AG04450 (cell line): ENCODE measurements at regions of chr17 and their contacts with region 1.

Region 1: DNA sequence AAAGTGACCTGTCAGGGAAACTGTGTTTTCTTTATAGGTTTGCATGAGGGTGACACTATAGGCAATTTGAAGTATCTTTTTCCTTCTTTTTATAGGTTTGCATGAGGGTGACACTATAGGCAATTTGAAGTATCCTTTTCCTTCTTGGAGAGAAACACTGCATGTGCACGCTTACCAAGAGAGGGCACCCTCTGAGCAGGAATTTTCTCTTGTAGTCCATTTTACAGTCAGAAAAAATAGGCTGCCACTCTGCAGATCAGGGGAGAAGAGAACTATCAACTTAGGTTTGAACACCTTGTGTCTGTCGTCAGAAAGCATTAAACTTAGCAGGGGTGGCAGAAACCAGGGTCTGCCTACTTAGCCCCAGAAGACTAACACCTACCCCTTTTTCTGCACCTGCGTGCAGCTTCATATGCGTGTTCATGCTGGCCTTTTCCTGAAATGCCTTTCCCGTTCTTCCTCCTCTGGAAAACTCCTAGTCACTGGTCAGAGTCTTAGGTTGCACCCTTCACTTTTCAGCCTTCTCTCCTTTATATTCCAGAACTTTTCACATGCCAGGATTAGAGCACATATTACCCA is 16.4 kb upstream of the SMIM36 start:
- DNase-seq: peak; percentile 44
- H3K4me3 ChIP-seq: no peak overlapping the region
- H3K27ac ChIP-seq: no peak overlapping the region
- H3K27me3 ChIP-seq: no peaks in the 10 kb centered on the region
- CTCF ChIP-seq: peak; percentile 81

Region 2: DNA sequence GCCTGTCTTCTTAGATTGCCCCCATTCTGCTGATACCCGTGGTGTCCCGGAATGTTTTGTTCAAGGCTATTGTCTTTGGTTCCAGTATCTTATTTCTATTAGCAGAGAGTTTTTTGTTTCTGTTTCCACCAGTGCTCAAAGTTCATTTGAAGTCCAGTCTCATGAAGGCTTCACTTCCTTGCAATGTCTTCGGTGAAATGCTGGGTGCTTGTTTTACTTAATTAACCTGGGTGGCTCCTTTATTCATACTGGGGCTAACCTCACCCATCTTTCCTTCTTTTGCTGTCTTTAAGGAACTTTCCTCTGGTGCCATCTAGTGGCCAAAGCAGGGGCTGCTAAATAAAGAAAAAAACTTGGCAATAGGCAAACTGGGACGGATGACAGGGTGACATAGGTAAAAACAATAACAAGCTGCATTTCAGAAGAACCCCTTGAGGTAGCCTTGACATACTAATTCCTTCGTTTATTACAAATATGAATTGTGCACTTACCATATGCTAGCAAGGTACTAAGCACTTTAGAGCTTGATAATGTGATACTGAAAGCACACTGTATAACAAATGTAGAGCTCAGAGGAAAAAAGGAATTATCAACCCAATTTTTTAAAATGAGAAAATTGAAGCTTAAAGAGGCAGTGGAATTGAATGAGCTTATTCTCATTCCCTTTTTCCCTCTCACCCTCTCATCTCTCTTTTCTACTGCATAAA is 13.6 kb before region 1 on chr17:
- CTCF ChIA-PET with region 1: interaction called, 16 read pairs
- POLR2A ChIA-PET with region 1: no interaction called
- DNase-seq: peak; percentile 30
- H3K4me3 ChIP-seq: no peak overlapping the region
- H3K27ac ChIP-seq: no peak overlapping the region
- H3K27me3 ChIP-seq: peaks cover 5% of the 10 kb centered on the region
- CTCF ChIP-seq: peak; percentile 99

Region 3: GRCh38 chr17:55563363-55563762 is 35.7 kb after region 1 on chr17:
- CTCF ChIA-PET with region 1: interaction called, 12 read pairs
- POLR2A ChIA-PET with region 1: no interaction called
- DNase-seq: no peak
- H3K4me3 ChIP-seq: no peak overlapping the region
- H3K27ac ChIP-seq: no peak overlapping the region
- H3K27me3 ChIP-seq: no peaks in the 10 kb centered on the region
- CTCF ChIP-seq: no peak

Region 4: DNA sequence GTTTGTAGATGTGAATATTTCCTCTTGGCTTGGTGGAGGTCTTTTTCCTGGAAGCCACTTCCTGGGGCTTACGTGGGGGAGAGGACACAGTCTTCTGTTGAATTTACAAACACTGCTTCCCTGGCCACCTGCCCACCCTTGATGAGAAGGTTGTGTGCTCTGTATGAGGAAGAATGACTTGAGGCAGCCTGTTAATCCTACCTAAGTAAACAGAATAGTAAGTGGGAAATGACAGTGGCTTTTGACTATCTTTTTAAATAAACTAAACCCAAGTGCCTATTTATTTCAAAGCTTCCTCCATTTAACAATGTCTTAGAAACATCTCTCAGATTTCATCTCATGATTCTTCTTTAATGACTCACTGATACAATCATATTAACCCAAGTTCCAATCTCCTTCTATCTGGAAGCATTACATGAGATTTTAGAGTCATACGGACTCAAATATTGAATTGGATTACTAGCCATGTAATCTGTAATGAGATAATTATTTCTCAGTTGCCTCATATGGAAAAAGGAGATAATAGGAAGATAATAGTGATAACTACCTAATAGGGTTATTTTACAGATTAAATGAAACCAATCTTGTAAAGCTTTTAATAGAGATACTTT is 80.2 kb after region 1 on chr17:
- CTCF ChIA-PET with region 1: interaction called, 568 read pairs
- POLR2A ChIA-PET with region 1: no interaction called
- DNase-seq: peak; percentile 57
- H3K4me3 ChIP-seq: no peak overlapping the region
- H3K27ac ChIP-seq: no peak overlapping the region
- H3K27me3 ChIP-seq: no peaks in the 10 kb centered on the region
- CTCF ChIP-seq: no peak

Region 5: DNA sequence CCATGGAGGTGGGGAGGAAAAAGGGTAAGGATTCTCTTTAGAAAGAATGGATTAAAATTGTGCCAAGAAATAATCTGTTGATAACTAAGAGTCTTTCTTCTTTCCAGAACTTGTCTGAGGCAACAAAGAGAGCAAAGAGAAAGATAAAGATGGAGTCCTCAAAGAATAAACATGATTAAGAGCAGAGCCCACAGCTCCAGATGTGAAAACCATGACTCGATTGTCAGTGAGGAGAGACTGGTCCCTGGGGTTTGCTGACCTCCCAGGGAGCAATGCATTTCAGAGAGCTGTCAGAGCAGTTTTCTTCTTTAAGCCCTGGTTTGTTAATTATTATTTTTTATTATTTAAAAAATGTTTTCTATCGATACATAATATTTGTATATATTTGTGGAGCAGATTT is 120.5 kb after region 1 on chr17:
- CTCF ChIA-PET with region 1: interaction called, 183 read pairs
- POLR2A ChIA-PET with region 1: no interaction called
- DNase-seq: no peak
- H3K4me3 ChIP-seq: no peak overlapping the region
- H3K27ac ChIP-seq: no peak overlapping the region
- H3K27me3 ChIP-seq: peaks cover 2% of the 10 kb centered on the region
- CTCF ChIP-seq: no peak

Region 6: GRCh38 chr17:55717898-55718735 is 190.5 kb after region 1 on chr17:
- CTCF ChIA-PET with region 1: interaction called, 165 read pairs
- POLR2A ChIA-PET with region 1: no interaction called
- DNase-seq: peak; percentile 48
- H3K4me3 ChIP-seq: no peak overlapping the region
- H3K27ac ChIP-seq: no peak overlapping the region
- H3K27me3 ChIP-seq: no peaks in the 10 kb centered on the region
- CTCF ChIP-seq: peak; percentile 80

Region 7: GRCh38 chr17:55763851-55764250 is 236.2 kb after region 1 on chr17:
- CTCF ChIA-PET with region 1: interaction called, 242 read pairs
- POLR2A ChIA-PET with region 1: no interaction called
- DNase-seq: no peak
- H3K4me3 ChIP-seq: no peak overlapping the region
- H3K27ac ChIP-seq: no peak overlapping the region
- H3K27me3 ChIP-seq: no peaks in the 10 kb centered on the region
- CTCF ChIP-seq: no peak